ENCODE measurements at regions of chr15 and their contacts with region 1.

Region 1: DNA sequence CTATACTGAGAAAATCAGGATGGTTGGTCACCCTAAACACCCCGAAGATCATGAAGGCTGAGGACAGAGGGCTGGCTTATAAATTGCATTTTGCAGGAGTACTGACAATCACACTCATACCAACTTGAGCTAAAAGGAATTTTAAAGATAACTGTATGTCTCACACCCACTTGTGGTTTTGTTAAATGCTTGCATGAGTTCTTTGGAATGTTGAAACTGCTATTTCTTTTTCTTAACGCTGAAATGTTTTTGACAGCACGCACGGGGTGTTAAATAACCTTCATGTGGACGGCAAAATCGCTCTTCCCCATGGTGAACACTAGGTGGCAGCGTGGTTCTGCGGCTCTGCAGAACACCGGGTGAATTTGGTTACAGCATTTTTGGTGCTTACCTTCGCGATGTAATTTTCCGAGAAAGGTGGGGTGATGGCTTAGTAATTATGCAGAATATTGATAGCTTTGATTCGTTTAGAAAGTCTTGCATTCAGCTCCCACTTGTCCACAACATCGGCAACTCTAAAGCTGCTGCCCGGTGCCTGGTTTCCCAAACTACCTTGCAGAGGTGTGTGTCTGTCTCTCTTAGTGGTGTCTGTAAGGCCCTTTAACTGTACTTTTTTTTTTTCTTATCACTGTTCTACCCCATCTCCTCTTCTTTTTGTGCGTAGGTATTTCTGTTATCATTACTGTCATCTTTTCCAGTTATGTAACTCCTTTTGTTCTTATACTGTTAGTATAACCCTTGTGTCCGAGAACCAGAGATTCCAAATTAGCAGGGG is 51.7 kb downstream of the ARNT2 start:
- DNase-seq: peak; percentile 87
- H3K4me3 ChIP-seq: no peak overlapping the region
- CTCF ChIP-seq: peak; percentile 83

Region 2: DNA sequence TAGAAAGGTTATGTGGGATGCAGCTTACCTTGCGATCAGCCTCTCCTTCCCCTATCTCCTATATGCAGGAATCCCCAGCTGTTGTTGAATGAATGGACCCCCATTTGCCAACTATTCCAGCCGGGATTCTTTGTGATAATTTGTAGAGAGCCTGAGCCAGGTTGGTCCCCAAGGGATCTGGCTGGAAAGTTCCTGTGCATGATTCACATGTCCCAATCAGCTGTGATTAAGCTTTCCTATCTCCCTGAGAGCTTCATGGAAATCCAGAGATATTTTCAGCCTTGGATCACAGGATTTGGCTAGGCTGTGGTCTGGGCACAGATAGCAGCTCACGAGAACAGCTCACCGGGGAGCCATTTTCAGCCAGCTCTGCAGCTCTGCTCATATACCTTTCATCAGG is 25.1 kb after region 1 on chr15:
- CTCF ChIA-PET with region 1: interaction called, 197 read pairs
- POLR2A ChIA-PET with region 1: interaction called, 3 read pairs
- DNase-seq: peak; percentile 93
- H3K4me3 ChIP-seq: peak overlapping the region; percentile 31
- CTCF ChIP-seq: no peak

Region 3: DNA sequence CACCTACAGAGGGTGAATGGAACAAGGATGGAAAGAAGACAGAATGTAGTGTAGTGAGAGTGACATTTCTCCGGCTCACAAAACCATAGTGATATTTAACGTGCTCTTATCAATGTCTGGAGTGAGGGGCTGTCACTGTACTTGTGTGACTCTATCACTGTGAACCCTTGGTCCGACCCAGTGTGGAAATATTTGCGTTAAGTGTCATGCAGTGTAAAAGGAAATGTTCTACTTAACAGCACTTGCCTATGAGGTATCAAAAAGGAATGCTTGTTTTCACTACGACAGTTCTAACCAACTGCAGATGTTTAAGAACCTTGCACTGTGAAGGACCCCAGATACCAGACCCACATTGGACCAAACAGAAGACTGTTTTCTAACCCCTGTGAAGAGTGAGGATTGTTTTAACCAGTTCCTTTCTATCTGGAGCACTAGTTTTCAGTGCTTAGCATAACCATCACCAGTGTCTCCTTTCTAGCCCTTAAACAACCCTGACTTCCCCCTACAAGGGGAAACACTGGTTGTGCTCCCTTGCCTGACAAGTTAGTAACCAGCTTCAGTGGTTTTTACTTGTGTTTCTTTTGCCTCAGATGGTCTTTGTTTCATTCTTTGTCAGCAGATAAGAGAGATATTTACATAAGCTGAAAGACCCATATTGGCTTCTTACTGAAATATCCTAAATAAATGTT is 94.5 kb after region 1 on chr15:
- CTCF ChIA-PET with region 1: interaction called, 14 read pairs
- POLR2A ChIA-PET with region 1: no interaction called
- DNase-seq: peak; percentile 89
- H3K4me3 ChIP-seq: peak overlapping the region; percentile 6
- CTCF ChIP-seq: no peak

Region 4: GRCh38 chr15:80588801-80589200 is 132.9 kb after region 1 on chr15:
- CTCF ChIA-PET with region 1: interaction called, 15 read pairs
- POLR2A ChIA-PET with region 1: no interaction called
- DNase-seq: peak; percentile 90
- H3K4me3 ChIP-seq: no peak overlapping the region
- CTCF ChIP-seq: no peak

Region 5: GRCh38 chr15:80695104-80695910 is 239.5 kb after region 1 on chr15 and contains the start of gene ABHD17C:
- CTCF ChIA-PET with region 1: interaction called, 13 read pairs
- POLR2A ChIA-PET with region 1: interaction called, 3 read pairs
- DNase-seq: no peak
- H3K4me3 ChIP-seq: peak within 1 kb of the TSS; percentile 85
- CTCF ChIP-seq: no peak

Region 6: DNA sequence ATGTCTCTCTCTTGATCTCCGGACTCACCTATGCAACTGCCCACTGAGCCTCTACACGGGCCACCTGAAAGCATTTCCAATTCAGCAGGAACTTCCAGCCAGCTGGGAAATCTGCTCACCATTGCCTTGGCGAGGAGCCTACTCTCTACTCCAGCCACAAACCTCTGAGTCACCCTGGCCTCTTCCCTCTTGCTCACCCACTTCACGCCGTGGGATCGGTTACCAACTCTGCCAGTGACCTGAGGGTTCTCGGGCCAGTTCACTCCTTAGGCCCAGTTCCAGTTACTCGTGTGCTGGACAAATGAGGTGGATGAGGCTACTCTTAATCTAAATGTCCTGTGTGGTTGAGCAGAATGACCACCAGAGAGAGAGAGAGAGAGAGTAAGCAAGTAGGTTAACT is 393.5 kb after region 1 on chr15:
- CTCF ChIA-PET with region 1: no interaction called
- POLR2A ChIA-PET with region 1: no interaction called
- DNase-seq: peak; percentile 59
- H3K4me3 ChIP-seq: no peak overlapping the region
- CTCF ChIP-seq: no peak

Region 7: DNA sequence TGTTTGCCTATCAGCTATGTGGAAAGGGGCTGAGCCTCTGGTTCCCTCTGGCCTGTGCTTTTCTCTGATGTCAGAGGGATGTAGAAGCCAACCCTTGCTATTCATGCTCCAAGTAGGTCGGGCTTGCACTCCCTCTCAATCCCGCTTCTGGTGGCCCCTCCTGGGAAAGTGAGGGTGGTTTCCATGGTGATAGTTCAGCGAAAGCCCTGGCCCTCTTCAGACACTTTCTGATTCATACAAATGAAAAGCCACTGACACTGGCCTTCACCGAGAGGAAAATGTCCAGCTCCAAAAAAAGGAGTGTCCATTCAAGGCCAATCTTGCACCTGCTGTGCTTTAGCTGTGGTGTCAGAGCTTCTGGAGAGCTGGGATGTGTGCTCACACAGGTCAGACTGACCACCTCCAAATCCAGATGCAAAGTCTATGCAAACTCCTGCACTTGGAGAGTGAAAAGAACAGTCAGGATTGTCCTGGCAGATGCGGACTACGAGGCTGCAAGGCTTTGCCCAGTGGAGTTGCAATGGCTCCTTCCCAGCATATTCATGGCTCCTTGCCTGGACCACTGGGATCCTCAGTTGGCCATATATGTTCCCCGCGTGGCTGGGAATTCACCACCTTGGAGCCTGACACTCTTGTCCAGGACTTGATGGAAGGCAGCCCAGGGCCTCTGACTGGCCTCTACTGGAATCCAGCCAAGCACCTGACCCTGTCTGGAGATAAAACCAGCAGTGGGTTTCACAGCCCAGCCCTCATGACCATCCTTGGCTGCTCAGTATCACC is 419.9 kb after region 1 on chr15:
- CTCF ChIA-PET with region 1: no interaction called
- POLR2A ChIA-PET with region 1: no interaction called
- DNase-seq: no peak
- H3K4me3 ChIP-seq: no peak overlapping the region
- CTCF ChIP-seq: no peak

Region 8: GRCh38 chr15:80970018-80970658 is 514.3 kb after region 1 on chr15:
- CTCF ChIA-PET with region 1: interaction called, 54 read pairs
- POLR2A ChIA-PET with region 1: no interaction called
- DNase-seq: no peak
- H3K4me3 ChIP-seq: no peak overlapping the region
- CTCF ChIP-seq: peak; percentile 63